B cell (primary cell): ENCODE measurements at regions of chr11 and their contacts with region 1.

Region 1: DNA sequence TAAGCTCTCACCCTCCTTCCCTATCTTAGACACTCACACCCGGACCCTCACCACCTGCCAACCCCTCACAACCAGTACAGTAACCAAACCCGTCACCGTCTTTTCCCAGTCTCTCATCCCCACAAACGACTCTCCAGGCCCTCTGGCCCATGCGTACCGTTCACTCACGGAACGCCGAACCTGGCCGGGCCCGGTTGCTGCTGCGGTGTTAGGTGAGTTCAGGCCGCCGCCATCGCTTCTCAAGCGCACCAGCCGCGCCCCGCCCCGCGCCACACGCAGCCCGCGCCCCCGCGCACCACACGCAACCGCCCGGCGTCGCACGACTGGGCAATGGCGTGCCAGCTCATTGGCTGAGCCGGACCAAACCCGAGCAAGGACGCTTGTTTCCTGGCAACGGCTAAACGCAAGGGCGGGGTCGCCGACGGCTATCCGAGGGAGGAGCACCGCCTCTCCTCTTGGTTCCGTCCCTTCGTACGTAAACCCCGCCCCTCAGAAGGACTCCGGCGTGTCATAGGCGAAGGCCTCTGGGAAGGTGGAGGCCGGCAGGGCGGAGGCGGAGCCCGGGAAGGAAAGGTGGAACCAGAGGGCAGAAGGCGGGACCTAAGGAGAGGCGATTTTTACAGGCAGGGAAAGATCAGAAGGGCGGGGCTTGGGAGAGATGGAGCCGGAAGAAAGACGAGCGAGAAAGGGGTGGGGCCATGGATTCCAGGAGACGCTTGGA is at the start of gene FHIP1B:
- DNase-seq: peak; percentile 100
- ATAC-seq: peak; percentile 92
- H3K4me3 ChIP-seq: peak within 1 kb of the TSS; percentile 71 to 90 (median 87)
- H3K4me3 Mint-ChIP-seq: peak within 1 kb of the TSS; percentile 98
- H3K27ac ChIP-seq: peak within 1 kb of the TSS; percentile 69 to 90
- H3K27ac Mint-ChIP-seq: peak within 1 kb of the TSS; percentile 91
- H3K4me1 ChIP-seq: peaks cover 7 to 13% of the 10 kb centered on the region in 2 donors
- H3K4me1 Mint-ChIP-seq: peaks cover 29% of the 10 kb centered on the region
- H3K27me3 ChIP-seq: peaks cover 0 to 9% (median 2%) of the 10 kb centered on the region in 4 experiments
- H3K27me3 Mint-ChIP-seq: no peaks in the 10 kb centered on the region
- CTCF ChIP-seq: no peak
- total RNA-seq, gene FHIP1B: 44.1 and 48.3 TPM in 2 replicates

Region 2: GRCh38 chr11:5624489-5625279 is 609.9 kb before region 1 on chr11 and contains the start of gene TRIM34:
- CTCF ChIA-PET with region 1: no interaction called
- POLR2A ChIA-PET with region 1: no interaction called
- intact Hi-C with region 1: loop called (anchors 2 kb)
- DNase-seq: peak; percentile 88
- ATAC-seq: peak; percentile 97
- H3K4me3 ChIP-seq: peak within 1 kb of the TSS; percentile 44 to 83 (median 73)
- H3K4me3 Mint-ChIP-seq: peak within 1 kb of the TSS; percentile 95
- H3K27ac ChIP-seq: peak within 1 kb of the TSS; percentile 63 to 89
- H3K27ac Mint-ChIP-seq: peak within 1 kb of the TSS; percentile 96
- H3K4me1 ChIP-seq: peaks cover 22 to 24% of the 10 kb centered on the region in 2 donors
- H3K4me1 Mint-ChIP-seq: peaks cover 46% of the 10 kb centered on the region
- H3K27me3 ChIP-seq: no peaks in the 10 kb centered on the region
- H3K27me3 Mint-ChIP-seq: no peaks in the 10 kb centered on the region
- CTCF ChIP-seq: no peak
- total RNA-seq, gene TRIM34: 24.1 and 29.1 TPM in 2 replicates

Region 3: DNA sequence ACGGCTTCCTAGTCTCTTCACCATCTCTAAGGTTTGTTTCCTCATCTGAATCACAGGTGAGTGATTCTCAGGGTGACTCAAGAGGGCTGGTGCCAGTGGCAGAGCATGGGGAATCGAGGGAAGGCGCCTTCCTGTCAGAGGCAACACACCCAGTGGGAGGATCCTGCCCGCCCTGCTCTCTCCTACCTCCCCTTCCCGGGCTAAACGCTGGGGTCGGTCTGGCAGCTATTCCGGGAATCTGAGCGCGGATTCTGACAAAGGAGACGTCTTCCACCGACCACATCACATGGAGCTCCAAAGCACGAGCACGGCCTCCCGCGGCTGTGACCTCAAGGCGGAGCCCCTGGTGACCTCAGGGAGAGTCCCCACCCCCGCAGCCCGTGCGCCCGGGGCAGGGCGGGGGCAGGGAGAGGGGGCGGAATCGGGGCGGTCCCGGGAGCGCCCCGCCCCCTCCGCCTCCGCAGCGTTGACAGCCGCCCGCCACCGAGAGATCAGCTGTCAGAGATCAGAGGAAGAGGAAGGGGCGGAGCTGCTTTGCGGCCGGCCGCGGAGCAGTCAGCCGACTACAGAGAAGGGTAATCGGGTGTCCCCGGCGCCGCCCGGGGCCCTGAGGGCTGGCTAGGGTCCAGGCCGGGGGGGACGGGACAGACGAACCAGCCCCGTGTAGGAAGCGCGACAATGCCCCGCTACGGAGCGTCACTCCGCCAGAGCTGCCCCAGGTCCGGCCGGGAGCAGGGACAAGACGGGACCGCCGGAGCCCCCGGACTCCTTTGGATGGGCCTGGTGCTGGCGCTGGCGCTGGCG is 155.6 kb after region 1 on chr11 and contains the start of gene SMPD1:
- CTCF ChIA-PET with region 1: no interaction called
- POLR2A ChIA-PET with region 1: interaction called, 3 read pairs
- intact Hi-C with region 1: loop called (anchors 1 kb)
- DNase-seq: peak; percentile 96
- ATAC-seq: peak; percentile 94
- H3K4me3 ChIP-seq: peak within 1 kb of the TSS; percentile 70 to 93 (median 85)
- H3K4me3 Mint-ChIP-seq: peak within 1 kb of the TSS; percentile 97
- H3K27ac ChIP-seq: peak within 1 kb of the TSS; percentile 98
- H3K27ac Mint-ChIP-seq: peak within 1 kb of the TSS; percentile 98
- H3K4me1 ChIP-seq: peaks cover 18 to 32% of the 10 kb centered on the region in 2 donors
- H3K4me1 Mint-ChIP-seq: peaks cover 32% of the 10 kb centered on the region
- H3K27me3 ChIP-seq: no peaks in the 10 kb centered on the region
- H3K27me3 Mint-ChIP-seq: no peaks in the 10 kb centered on the region
- CTCF ChIP-seq: no peak
- total RNA-seq, gene SMPD1: 18.3 TPM in 2 replicates

Region 4: GRCh38 chr11:6603287-6604080 is 368.9 kb after region 1 on chr11 and contains the starts of genes ILK and RRP8:
- CTCF ChIA-PET with region 1: no interaction called
- POLR2A ChIA-PET with region 1: no interaction called
- intact Hi-C with region 1: loop called (anchors 5 kb)
- DNase-seq: peak; percentile 91
- ATAC-seq: peak; percentile 92
- H3K4me3 ChIP-seq: peak within 1 kb of the TSS; percentile 77 to 96 (median 93)
- H3K4me3 Mint-ChIP-seq: no peak within 1 kb of the TSS
- H3K27ac ChIP-seq: peak within 1 kb of the TSS; percentile 70 to 89
- H3K27ac Mint-ChIP-seq: no peak within 1 kb of the TSS
- H3K4me1 ChIP-seq: peaks cover 51 to 56% of the 10 kb centered on the region in 2 donors
- H3K4me1 Mint-ChIP-seq: peaks cover 42% of the 10 kb centered on the region
- H3K27me3 ChIP-seq: no peaks in the 10 kb centered on the region
- H3K27me3 Mint-ChIP-seq: no peaks in the 10 kb centered on the region
- CTCF ChIP-seq: peak; percentile 8
- total RNA-seq, gene ILK: 119 and 131 TPM in 2 replicates
- total RNA-seq, gene RRP8: 29.4 and 29.5 TPM in 2 replicates

Region 5: GRCh38 chr11:6746086-6746618 is 511.6 kb after region 1 on chr11:
- CTCF ChIA-PET with region 1: no interaction called
- POLR2A ChIA-PET with region 1: no interaction called
- intact Hi-C with region 1: loop called (anchors 2 kb)
- DNase-seq: peak; percentile 74
- ATAC-seq: peak; percentile 84
- H3K4me3 ChIP-seq: peak overlapping the region; percentile 54 to 95 (median 80)
- H3K4me3 Mint-ChIP-seq: no peak overlapping the region
- H3K27ac ChIP-seq: peak overlapping the region; percentile 83 to 95
- H3K27ac Mint-ChIP-seq: no peak overlapping the region
- H3K4me1 ChIP-seq: peaks cover 49 to 58% of the 10 kb centered on the region in 2 donors
- H3K4me1 Mint-ChIP-seq: peaks cover 25% of the 10 kb centered on the region
- H3K27me3 ChIP-seq: no peaks in the 10 kb centered on the region
- H3K27me3 Mint-ChIP-seq: no peaks in the 10 kb centered on the region
- CTCF ChIP-seq: no peak

Region 6: DNA sequence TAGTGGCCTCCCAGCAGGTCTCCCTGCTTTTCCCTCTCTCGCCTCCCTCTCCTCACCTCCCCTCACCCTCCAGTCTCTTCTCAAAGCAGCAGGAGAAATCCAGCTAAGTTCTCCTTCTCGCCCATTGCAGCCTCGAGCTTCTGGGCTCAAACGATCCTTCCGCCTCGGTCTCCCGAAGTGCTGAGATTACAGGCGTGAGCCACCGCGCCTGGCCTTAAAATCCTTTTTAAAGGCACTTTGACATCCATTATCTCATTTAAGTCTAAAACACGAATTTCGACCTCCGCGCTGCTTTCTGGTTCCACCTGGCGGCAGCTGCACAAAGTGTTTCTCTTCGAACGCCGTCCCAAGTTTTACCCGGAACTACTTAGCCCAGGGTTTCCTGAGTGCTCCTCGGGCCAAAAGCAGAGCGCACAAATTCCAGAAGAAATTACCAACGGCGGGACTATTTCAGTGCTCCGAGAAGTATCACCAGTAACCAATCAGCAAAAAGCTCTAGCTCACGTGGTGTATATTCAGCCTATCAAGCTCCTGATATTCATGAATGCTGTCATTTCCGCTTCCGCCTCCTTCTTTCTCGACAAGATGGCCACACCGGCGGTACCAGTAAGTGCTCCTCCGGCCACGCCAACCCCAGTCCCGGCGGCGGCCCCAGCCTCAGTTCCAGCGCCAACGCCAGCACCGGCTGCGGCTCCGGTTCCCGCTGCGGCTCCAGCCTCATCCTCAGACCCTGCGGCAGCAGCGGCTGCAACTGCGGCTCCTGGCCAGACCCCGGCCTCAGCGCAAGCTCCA is 1752.4 kb after region 1 on chr11 and contains the start of gene EIF3F:
- CTCF ChIA-PET with region 1: no interaction called
- POLR2A ChIA-PET with region 1: no interaction called
- intact Hi-C with region 1: loop called (anchors 5 kb)
- DNase-seq: peak; percentile 98
- ATAC-seq: peak; percentile 97
- H3K4me3 ChIP-seq: peak within 1 kb of the TSS; percentile 58 to 83 (median 63)
- H3K4me3 Mint-ChIP-seq: peak within 1 kb of the TSS; percentile 93
- H3K27ac ChIP-seq: peak within 1 kb of the TSS; percentile 56 to 86
- H3K27ac Mint-ChIP-seq: peak within 1 kb of the TSS; percentile 94
- H3K4me1 ChIP-seq: peaks cover 24 to 26% of the 10 kb centered on the region in 2 donors
- H3K4me1 Mint-ChIP-seq: peaks cover 37% of the 10 kb centered on the region
- H3K27me3 ChIP-seq: no peaks in the 10 kb centered on the region
- H3K27me3 Mint-ChIP-seq: no peaks in the 10 kb centered on the region
- CTCF ChIP-seq: peak; percentile 85
- total RNA-seq, gene EIF3F: 316 and 330 TPM in 2 replicates